ENCODE measurements at regions of chr11 and their contacts with region 1.

Region 1: GRCh38 chr11:86202013-86202336 is 42.6 kb upstream of the EED start:
- DNase-seq: peak; percentile 31
- H3K4me3 Mint-ChIP-seq: no peak overlapping the region
- H3K27ac Mint-ChIP-seq: no peak overlapping the region
- H3K4me1 Mint-ChIP-seq: peaks cover 16% of the 10 kb centered on the region
- H3K27me3 Mint-ChIP-seq: no peaks in the 10 kb centered on the region

Region 2: GRCh38 chr11:86041975-86042378 is 160.0 kb before region 1 on chr11:
- CTCF ChIA-PET with region 1: interaction called, 20 read pairs
- POLR2A ChIA-PET with region 1: interaction called, 5 read pairs
- DNase-seq: peak; percentile 52
- H3K4me3 Mint-ChIP-seq: no peak overlapping the region
- H3K27ac Mint-ChIP-seq: peak overlapping the region; percentile 1
- H3K4me1 Mint-ChIP-seq: peaks cover 67% of the 10 kb centered on the region
- H3K27me3 Mint-ChIP-seq: no peaks in the 10 kb centered on the region

Region 3: GRCh38 chr11:86174101-86175046 is 27.6 kb before region 1 on chr11:
- CTCF ChIA-PET with region 1: interaction called, 3 read pairs
- POLR2A ChIA-PET with region 1: interaction called, 10 read pairs
- DNase-seq: no peak
- H3K4me3 Mint-ChIP-seq: no peak overlapping the region
- H3K27ac Mint-ChIP-seq: peak overlapping the region; percentile 16
- H3K4me1 Mint-ChIP-seq: no peaks in the 10 kb centered on the region
- H3K27me3 Mint-ChIP-seq: no peaks in the 10 kb centered on the region